HEK293 (cell line): ENCODE measurements at regions of chr17 and their contacts with region 1.

Region 1: DNA sequence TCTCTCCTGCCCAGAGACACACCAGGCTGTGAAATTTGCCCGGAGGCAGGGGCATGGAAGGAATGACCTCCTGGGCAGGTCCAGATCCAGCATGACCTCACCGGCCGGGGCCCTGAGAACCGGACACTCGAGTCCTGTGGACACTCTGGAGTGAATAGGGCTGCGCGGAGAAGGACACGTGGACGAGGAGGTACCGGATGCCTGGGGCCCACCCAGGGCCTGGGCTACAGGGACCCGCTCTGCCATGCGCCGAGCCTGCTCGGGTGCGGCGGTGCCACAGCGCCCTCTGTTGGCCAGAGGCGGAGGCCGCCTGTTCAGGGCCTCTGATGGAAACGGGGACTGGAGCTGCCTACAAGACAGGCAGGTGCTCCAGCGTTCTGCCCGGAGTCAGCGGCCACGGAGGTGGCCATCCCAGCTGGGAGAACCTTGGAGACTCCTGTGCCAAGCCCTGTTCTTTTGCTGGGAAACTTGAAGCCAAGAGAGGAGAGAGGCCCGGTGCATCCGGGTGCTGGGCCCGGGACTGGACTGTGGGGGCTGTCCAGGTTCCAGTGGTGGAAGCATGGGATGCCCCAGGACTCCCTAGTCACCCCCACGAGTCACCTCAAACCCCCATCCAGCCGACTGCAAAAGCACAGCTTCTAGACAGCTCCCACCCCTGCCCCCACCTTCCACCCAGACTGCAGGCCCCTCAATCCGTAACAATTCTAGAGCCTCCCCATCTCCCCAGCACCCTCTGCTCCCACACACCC is 19.3 kb upstream of the NXPH3 start:
- H3K4me3 ChIP-seq: no peak overlapping the region
- H3K27ac ChIP-seq: peak overlapping the region; percentile 12; the same call in 1 of the 2 replicates
- H3K4me1 ChIP-seq: 0 out of 2 replicates have a peak, but pooled peaks cover 2% of the 10 kb centered on the region
- CTCF ChIP-seq: peak; percentile 97

Region 2: DNA sequence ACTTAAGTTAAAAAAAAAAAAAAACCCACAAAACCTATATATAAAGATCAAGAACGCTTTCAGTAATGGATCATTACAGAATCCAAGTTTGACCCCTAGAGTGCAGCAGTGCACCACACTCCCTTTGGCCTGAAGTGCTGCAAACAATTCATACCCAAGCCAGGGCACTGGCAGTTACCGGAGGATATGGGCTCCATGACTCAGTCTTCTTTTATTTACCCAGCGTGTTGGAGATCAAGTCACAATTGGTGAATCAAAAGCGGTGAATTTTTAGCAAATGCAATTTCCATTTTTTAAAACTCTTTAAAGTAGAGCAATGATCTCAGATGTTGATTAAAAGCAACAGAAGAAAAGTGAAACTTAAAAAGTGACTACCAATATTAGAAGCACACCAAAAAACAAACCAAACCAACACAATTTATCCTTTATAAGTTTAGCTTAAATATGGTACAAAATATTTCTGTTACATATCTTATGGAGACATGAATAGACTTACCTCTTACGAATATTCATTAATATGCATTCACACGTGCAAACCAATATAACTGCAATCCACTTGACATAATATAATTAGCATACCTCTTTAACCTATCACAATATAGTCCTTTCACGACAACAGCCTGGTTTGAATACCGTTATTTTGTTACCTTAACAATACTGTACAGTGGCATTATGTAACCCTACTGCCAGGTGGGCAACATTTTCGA is 240.7 kb before region 1 on chr17:
- CTCF ChIA-PET with region 1: interaction called, 42 read pairs
- POLR2A ChIA-PET with region 1: no interaction called
- H3K4me3 ChIP-seq: no peak overlapping the region
- H3K27ac ChIP-seq: no peak overlapping the region
- H3K4me1 ChIP-seq: peaks cover 4% of the 10 kb centered on the region; the same call in 1 of the 2 replicates
- CTCF ChIP-seq: peak; percentile 84

Region 3: GRCh38 chr17:49399995-49400394 is 156.4 kb before region 1 on chr17:
- CTCF ChIA-PET with region 1: interaction called, 174 read pairs
- POLR2A ChIA-PET with region 1: no interaction called
- H3K4me3 ChIP-seq: no peak overlapping the region
- H3K27ac ChIP-seq: no peak overlapping the region
- H3K4me1 ChIP-seq: no peaks in the 10 kb centered on the region
- CTCF ChIP-seq: no peak

Region 4: GRCh38 chr17:49434821-49435670 is 121.4 kb before region 1 on chr17:
- CTCF ChIA-PET with region 1: interaction called, 303 read pairs
- POLR2A ChIA-PET with region 1: interaction called, 3 read pairs
- H3K4me3 ChIP-seq: no peak overlapping the region
- H3K27ac ChIP-seq: no peak overlapping the region
- H3K4me1 ChIP-seq: no peaks in the 10 kb centered on the region
- CTCF ChIP-seq: peak; percentile 39; the same call in 1 of the 2 replicates

Region 5: GRCh38 chr17:49515196-49515770 is 41.1 kb before region 1 on chr17:
- CTCF ChIA-PET with region 1: interaction called, 15 read pairs
- POLR2A ChIA-PET with region 1: no interaction called
- H3K4me3 ChIP-seq: no peak overlapping the region
- H3K27ac ChIP-seq: peak overlapping the region; percentile 38
- H3K4me1 ChIP-seq: no peaks in the 10 kb centered on the region; the same call in 1 of the 2 replicates
- CTCF ChIP-seq: no peak; the same call in 1 of the 2 replicates

Region 6: GRCh38 chr17:49646391-49647255 is 90.2 kb after region 1 on chr17:
- CTCF ChIA-PET with region 1: interaction called, 11 read pairs
- POLR2A ChIA-PET with region 1: no interaction called
- H3K4me3 ChIP-seq: no peak overlapping the region
- H3K27ac ChIP-seq: peak overlapping the region; percentile 39
- H3K4me1 ChIP-seq: peaks cover 8% of the 10 kb centered on the region
- CTCF ChIP-seq: no peak